ENCODE measurements at regions of chrX and their contacts with region 1.

Region 1: DNA sequence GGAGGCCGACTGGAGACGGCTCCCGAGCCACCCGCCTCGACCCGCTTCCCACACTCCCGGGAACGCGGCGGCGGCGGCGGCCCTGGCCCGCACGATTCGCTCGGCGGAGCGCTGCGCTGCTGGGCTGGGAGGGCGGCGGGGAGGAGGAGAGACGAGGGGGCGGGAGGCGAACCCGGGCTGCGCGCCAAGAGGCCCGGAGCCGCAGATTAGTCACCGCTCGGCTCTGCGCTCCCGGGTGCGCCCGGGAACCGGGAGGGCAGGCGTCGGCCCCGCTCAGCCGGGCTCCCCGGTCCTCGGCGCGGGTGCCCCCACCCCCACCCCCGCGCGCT is 11.2 kb upstream of the BCOR start:
- DNase-seq: peak; percentile 85
- ATAC-seq: peak; percentile 82

Region 2: GRCh38 chrX:40171513-40172400 is 62.8 kb after region 1 on chrX:
- intact Hi-C with region 1: loop called (anchors 2 kb)
- DNase-seq: peak; percentile 69
- ATAC-seq: peak; percentile 20

Measured in Right ventricle myocardium superior (tissue), 1 donor.